OCI-LY7 (cell line): ENCODE measurements at regions of chr11 and their contacts with region 1.

Region 1: DNA sequence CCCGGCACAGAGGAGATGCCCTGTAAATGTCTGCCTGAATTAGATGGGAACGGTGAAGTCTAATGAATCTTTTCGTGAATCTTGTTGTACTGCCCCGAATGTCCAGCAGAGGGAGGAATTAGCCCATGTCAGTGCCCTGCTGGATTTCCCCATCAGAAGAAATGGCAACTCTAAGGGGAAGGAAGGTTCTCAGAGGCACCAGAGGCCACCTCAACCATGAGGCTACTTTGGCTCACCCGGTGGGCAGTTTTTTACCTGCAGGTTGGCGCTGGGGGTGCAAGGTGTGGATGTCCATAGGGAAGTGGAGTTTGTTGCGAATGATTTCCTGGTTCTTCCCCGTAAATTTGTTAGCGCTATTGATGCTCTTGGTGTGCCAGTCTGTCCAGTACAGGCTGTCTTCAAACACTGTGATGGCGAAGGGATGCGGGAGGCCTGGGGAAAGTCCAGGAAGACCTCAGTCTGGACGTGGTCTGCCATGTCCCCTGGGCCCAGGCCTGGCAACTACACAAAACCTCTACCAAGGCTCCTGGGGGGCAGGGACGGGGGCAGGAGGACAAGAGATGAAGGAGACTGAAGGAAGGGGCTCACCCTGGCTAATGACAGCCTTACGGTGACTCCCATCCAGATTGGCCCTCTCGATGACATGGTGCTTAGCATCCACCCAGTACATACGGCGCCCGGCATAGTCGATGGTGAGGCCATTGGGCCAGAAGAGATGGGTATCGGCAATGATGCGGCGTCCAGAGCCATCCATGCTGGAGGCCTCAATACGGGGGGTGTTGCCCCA is 28.5 kb downstream of the LRP4 start:
- DNase-seq: peak; percentile 85
- H3K4me3 ChIP-seq: no peak overlapping the region
- H3K27ac ChIP-seq: peak overlapping the region; percentile 4
- H3K4me1 ChIP-seq: peaks cover 4% of the 10 kb centered on the region
- CTCF ChIP-seq: peak; percentile 90

Region 2: DNA sequence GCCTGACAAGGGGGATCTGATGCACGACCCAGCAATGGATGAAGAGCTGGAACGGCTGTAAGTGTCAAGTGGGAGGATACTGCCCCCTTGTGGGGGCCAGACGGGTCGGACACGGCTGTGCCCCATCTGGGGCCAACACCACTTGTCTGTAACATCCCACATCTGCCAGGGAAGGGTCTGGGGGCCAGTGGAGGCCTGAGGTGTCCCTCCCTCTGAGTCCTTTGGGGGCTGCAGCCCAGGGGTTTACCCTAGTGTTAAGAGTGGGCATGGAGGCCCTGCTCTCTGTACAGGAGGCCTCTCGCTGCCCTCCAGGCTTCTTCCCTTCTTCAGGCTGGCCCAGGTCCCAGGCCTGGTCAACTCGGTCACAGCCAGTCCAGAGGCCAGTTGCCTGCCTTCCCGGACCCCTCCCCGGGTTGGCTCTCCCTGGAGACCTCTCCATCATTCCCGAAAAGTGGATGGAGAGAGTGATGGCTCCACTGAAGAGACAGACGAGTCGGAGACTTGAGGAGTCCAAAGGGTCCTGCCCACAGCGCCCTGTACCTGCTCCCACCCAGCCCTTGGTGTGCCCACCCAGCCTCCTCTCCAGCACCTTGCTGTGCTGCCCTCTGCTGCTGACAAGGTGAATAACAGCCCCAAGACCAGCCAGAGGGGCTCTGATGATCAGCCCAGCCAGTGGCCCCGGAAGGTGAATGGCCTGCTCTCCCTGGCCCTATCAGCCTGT is 271.4 kb after region 1 on chr11:
- CTCF ChIA-PET with region 1: no interaction called
- POLR2A ChIA-PET with region 1: interaction called, 3 read pairs
- intact Hi-C with region 1: loop called (anchors 1 kb)
- DNase-seq: peak; percentile 89
- H3K4me3 ChIP-seq: no peak overlapping the region
- H3K27ac ChIP-seq: peak overlapping the region; percentile 44
- H3K4me1 ChIP-seq: peaks cover 31% of the 10 kb centered on the region
- CTCF ChIP-seq: peak; percentile 81